Breast epithelium (tissue), 4 donors: ENCODE measurements at regions of chrX and their contacts with region 1.

Region 1: DNA sequence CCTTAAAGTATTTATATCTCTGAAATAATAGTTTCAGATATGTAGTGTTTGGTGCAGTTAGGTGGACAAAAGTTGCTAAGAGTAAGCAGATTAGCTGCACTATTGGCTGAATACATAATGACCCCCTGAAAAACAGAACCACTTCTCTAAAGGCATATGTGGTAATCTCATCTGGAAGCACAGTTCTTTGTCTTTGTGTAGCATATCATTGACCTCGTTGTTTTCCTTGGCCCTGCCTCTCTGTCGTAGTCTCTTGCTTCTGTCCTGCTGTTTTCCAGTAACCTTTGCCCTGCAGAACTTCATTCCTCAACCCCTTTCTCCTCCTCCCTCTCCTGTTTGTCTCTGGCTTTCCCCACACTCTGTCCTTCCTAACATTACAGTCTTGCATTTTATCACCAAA is 41.4 kb downstream of the JADE3 start:
- DNase-seq: no peak
- H3K4me3 ChIP-seq: no peak overlapping the region
- H3K27ac ChIP-seq: no peak overlapping the region
- H3K4me1 ChIP-seq: no peaks in the 10 kb centered on the region
- H3K27me3 ChIP-seq: peaks cover 0 to 24% of the 10 kb centered on the region in 2 donors
- CTCF ChIP-seq: no peak
- POLR2A ChIP-seq: no peak

Region 2: DNA sequence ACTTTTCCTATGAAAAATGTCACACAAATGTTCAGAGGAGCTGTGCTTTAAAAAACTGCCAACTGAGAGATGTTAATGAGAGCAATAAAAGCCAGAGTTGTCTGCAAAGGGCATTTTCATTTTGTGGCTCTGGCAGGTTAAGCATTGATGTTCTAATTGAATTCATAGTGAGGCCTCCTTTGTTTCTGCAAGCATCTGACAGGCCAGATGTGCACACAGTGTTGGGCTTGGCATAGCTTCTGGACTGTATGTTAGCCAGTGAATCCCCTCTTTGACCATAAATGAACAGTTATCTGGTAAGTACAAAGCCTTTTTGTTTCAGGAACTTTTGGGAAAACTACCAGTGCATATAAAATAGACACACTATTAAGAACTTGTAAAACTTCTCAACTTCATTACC is 40.5 kb after region 1 on chrX:
- intact Hi-C with region 1: loop called (anchors 2 kb)
- DNase-seq: no peak
- H3K4me3 ChIP-seq: no peak overlapping the region
- H3K27ac ChIP-seq: no peak overlapping the region
- H3K4me1 ChIP-seq: no peaks in the 10 kb centered on the region
- H3K27me3 ChIP-seq: peaks cover 0 to 28% of the 10 kb centered on the region in 2 donors
- CTCF ChIP-seq: no peak
- POLR2A ChIP-seq: no peak

Region 3: DNA sequence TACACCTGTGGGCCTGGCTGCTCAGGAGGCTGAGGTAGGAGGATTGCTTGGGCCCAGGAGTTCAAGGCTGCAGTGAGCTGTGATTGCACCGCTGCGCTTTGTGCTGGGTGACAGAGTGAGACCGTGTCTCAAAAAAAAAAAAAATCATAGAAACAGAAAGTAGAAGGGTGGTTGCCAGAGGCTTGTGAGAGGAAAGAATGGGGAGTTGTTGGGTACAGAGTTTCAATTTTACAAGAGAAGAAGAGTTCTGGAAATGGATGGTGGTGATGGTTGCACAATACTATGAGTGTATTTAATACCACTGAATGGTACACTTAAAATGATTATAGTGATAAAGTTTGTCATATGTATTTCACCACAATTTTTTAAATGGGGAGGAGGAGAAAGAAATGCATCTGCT is 1797.7 kb after region 1 on chrX:
- intact Hi-C with region 1: no loop called
- DNase-seq: no peak
- H3K4me3 ChIP-seq: no peak overlapping the region
- H3K27ac ChIP-seq: no peak overlapping the region
- H3K4me1 ChIP-seq: no peaks in the 10 kb centered on the region
- H3K27me3 ChIP-seq: peaks cover 0 to 42% of the 10 kb centered on the region in 2 donors
- CTCF ChIP-seq: no peak
- POLR2A ChIP-seq: no peak